ENCODE measurements at regions of chr11 and their contacts with region 1.

Region 1: GRCh38 chr11:128399251-128400121 is 187.9 kb downstream of the ETS1 start:
- DNase-seq: no peak

Region 2: DNA sequence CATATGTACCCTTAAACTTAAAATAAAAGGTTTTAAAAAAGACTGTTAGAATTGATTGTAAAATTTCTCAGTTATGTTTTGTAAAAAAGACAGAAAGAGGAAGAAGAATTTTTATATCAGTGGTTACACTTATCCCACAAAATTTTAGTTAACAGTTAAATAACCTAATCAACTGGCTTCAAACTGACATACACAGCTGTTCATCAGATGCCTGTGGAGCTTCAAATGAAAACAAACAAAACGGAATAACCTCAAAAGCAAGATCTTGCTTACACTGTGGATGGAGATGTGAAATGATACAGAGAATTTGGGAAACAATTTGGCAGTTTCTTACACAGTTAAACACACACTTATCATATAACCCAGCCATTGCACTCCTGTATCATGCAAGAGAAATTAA is 333.1 kb before region 1 on chr11:
- intact Hi-C with region 1: loop called in 1 of 2 experiments (anchors 5 kb)
- DNase-seq: no peak

Region 3: DNA sequence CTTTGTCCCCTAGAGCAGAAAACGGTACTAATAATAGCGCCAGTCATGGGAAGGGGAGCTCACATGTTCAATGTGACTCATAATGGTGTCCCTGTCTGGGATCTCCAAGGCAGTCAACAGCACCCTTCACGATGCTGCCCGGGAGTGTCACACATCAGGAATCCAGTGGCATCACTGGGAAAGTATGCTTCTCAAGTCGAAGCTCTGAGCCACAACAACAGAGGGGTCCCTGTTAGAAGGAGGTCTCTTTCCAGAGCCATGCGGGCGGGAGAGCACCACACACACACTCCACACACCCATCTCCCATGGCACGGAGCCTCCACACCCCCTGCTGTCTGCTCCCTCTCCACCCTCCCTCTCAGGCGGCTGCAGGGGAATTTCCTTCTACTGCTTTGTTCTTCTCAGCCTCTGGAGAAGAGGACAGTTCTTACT is 68.1 kb after region 1 on chr11:
- intact Hi-C with region 1: no loop called
- DNase-seq: no peak